HCT116 (cell line): ENCODE measurements at regions of chr6 and their contacts with region 1.

Region 1: DNA sequence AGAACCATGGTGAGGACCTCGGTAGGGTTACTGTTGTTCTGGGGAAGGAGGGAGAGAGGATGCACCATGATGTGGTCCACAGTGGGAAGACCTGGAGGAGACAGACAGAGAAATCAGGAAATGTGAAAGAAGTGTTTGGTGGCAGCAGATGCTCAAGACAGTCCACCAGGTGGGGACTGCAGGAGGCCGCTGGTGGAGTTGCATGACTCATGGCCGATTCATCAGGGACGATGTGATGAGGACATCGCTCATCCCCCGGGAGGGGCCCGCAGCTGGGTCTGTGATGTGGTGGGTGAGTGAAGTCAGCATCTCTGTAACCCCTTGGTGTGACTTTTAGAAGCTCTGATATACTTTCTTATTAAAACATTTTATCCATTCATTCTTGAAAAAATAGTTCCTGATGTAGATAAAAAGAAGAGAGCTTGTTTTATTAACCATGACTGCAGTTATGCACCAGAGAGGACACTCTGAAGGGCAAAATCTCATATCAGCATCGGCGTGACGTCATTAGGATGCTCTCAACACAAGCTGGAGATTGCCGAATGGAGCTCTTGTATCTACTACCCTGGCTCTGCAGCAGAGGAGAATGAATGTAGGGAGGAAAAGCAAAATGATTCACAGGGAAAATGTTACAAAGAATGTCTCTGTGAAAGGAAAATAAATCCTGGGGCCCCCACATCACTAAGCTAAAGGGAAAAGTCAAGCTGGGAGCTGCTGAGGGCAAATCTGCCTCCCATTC is 71.2 kb downstream of the RAMACL start:
- DNase-seq: peak; percentile 55
- ATAC-seq: peak; percentile 82
- H3K4me3 ChIP-seq: no peak overlapping the region
- H3K27ac ChIP-seq: no peak overlapping the region
- H3K4me1 ChIP-seq: peaks cover 9 to 23% of the 10 kb centered on the region in 2 experiments
- H3K27me3 ChIP-seq: no peaks in the 10 kb centered on the region
- CTCF ChIP-seq: peak; percentile 48 to 57 (median 50); a peak in 5 of 6 replicates
- POLR2A ChIP-seq: no peak
- RAD21 ChIP-seq: peak; percentile 71

Region 2: GRCh38 chr6:166275714-166276166 is 239.5 kb before region 1 on chr6:
- CTCF ChIA-PET with region 1: no interaction called
- POLR2A ChIA-PET with region 1: no interaction called
- RAD21 ChIA-PET with region 1: no interaction called
- intact Hi-C with region 1: loop called (anchors 1 kb)
- DNase-seq: no peak
- ATAC-seq: peak; percentile 97
- H3K4me3 ChIP-seq: no peak overlapping the region
- H3K27ac ChIP-seq: no peak overlapping the region
- H3K4me1 ChIP-seq: peaks cover 0 to 4% of the 10 kb centered on the region in 2 experiments; a peak in 1 of 4 replicates
- H3K27me3 ChIP-seq: no peaks in the 10 kb centered on the region
- CTCF ChIP-seq: peak; percentile 98 to 99 (median 99)
- POLR2A ChIP-seq: no peak
- RAD21 ChIP-seq: peak; percentile 97

Region 3: DNA sequence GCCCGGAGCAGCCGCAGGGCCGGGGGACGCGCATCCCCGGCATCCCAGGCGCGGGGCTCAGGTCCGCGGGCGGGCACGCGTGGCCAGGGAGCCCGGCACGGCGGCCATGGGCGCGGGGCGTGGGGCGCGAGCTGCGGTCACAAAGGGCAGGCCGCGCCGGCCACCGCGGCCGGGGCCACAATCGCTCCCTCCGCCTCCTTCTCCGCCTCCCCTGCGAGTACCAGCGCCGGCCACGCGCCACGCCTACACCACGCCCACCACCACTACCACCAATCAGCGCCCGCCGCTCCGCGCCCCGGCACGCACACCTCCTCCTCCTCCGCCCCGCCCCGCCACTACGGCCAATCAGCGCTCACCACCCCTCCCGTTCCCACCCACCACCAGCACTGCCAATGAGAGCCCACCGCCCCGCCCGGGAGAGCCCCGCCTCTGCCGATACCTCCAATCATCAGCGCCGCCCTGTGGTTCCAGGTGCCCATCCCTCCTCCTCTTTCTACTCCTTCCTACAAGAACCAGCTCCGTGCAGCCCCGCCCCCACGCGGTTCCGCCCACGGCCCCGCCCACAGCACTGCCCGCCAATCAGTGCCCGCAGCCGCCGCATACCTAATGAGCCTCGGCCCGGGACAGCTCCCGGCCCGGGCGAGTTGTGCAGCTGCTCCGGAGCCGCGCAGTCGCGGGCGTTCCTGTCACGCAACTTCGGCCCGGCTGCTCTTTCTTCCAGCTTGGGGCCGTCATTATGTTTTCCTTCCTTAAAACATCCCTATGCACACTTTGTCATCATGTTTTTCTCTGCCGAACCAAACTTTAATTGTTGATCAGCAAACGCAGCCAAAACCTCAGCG is 112.0 kb after region 1 on chr6 and contains the start of gene RPS6KA2:
- CTCF ChIA-PET with region 1: no interaction called
- POLR2A ChIA-PET with region 1: interaction called, 4 read pairs
- RAD21 ChIA-PET with region 1: no interaction called
- intact Hi-C with region 1: loop called (anchors 5 kb)
- DNase-seq: peak; percentile 97
- ATAC-seq: peak; percentile 94
- H3K4me3 ChIP-seq: peak within 1 kb of the TSS; percentile 54 to 68
- H3K27ac ChIP-seq: peak within 1 kb of the TSS; percentile 47
- H3K4me1 ChIP-seq: peaks cover 9 to 32% of the 10 kb centered on the region in 2 experiments; a peak in 3 of 4 replicates
- H3K27me3 ChIP-seq: no peaks in the 10 kb centered on the region
- CTCF ChIP-seq: no peak
- POLR2A ChIP-seq: peak; percentile 42
- RAD21 ChIP-seq: 0 out of 2 replicates have a peak, but pooled peaks have one; percentile 6
- total RNA-seq, gene RPS6KA2: 8.5 TPM

Region 4: DNA sequence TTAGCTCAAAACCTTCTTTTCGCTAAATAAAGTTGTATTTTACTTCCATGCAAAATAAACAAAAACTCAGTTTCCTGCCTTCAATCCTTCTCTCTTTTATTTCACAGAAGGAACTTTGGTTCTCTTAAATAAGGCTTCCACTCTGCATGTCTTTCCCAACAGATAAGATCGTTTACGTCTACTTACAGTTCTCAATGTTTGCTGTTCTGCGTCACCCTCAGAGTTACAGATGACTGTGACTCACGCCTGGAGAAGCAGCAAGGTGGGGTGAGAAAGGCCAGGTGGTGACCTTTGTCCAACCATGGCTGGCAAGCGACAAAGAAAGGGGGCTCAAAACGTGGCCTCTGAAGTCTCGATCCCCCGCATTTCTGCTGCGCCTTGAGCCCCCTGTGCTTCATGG is 163.2 kb after region 1 on chr6:
- CTCF ChIA-PET with region 1: no interaction called
- POLR2A ChIA-PET with region 1: no interaction called
- RAD21 ChIA-PET with region 1: no interaction called
- intact Hi-C with region 1: no loop called
- DNase-seq: peak; percentile 54
- ATAC-seq: peak; percentile 86
- H3K4me3 ChIP-seq: peak overlapping the region in 1 of 2 experiments; percentile 32; a peak in 2 of 4 replicates
- H3K27ac ChIP-seq: peak overlapping the region; percentile 17; the same call in 1 of the 2 replicates
- H3K4me1 ChIP-seq: peaks cover 15 to 28% of the 10 kb centered on the region in 2 experiments
- H3K27me3 ChIP-seq: no peaks in the 10 kb centered on the region
- CTCF ChIP-seq: no peak
- POLR2A ChIP-seq: no peak
- RAD21 ChIP-seq: no peak

Region 5: GRCh38 chr6:166691199-166691598 is 176.0 kb after region 1 on chr6:
- CTCF ChIA-PET with region 1: no interaction called
- POLR2A ChIA-PET with region 1: no interaction called
- RAD21 ChIA-PET with region 1: no interaction called
- intact Hi-C with region 1: loop called (anchors 5 kb)
- DNase-seq: peak; percentile 81
- ATAC-seq: peak; percentile 81
- H3K4me3 ChIP-seq: peak overlapping the region; percentile 4 to 29; a peak in 2 of 4 replicates
- H3K27ac ChIP-seq: peak overlapping the region; percentile 68
- H3K4me1 ChIP-seq: peaks cover 53 to 61% of the 10 kb centered on the region in 2 experiments
- H3K27me3 ChIP-seq: no peaks in the 10 kb centered on the region
- CTCF ChIP-seq: no peak
- POLR2A ChIP-seq: no peak
- RAD21 ChIP-seq: peak; percentile 32